Activated B cell treated with CpG ODN at 0.5 μM for 24 hours (primary cell): ENCODE measurements at regions of chr19 and their contacts with region 1.

Region 1: DNA sequence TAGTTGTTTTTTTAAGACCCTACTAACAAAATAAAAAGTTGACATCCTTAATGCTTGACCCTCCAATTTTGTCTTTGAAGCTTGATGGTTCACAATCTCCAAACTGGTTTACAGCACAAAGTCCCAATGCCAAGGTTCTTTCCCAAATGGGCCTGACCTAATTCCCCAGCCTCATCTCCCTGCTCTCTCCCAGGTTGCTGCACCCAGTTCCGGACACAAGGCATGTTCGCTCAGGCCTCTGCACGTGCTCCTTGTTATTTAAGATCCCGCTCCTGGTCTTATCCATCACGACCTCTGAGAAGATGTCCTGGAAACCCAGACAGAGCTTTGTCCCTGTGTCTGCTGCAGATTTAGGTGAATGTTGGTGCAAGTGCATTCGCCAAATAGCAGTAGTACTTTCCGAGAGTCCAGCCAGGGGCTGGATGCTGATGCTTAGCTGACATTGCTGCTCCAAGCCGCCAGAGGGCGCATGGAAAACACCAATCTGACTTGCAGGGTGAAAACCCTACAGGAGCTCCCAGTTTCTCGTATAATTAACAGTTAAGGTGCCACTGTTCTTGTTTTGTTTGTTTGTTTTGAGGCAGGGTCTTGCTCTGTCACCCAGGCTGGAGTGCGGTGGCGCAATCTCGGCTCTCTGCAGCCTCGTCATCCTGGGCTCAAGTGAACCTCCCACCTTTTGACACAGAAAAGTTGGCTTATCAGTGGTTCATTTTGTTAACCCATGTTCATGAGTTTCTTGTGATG is 18.5 kb downstream of the LYPD3 start:
- DNase-seq: peak; percentile 67
- ATAC-seq: peak; percentile 90
- H3K4me3 Mint-ChIP-seq: no peak overlapping the region
- H3K27ac Mint-ChIP-seq: no peak overlapping the region
- H3K4me1 Mint-ChIP-seq: peaks cover 6% of the 10 kb centered on the region
- H3K27me3 Mint-ChIP-seq: no peaks in the 10 kb centered on the region
- CTCF ChIP-seq: peak; percentile 47

Region 2: DNA sequence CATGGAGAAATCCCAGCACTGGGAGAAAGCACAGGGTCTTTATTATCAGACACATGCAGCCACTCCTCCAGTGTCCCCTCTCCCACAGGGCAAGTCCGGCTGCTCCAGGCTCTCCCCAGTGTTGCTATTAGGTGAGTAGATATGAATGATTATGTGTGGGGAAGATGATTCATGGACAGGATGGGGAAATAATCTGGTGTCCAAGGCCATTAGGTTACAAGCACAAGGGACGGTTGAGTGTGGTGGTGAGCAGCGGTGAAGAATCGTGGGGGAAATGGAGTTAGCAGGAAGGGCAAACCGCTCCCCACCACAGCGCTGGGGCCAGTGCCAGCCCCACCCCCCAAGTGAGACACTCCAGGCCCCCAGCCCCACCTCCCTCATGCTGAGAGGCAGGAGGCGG is 74.5 kb before region 1 on chr19:
- CTCF ChIA-PET with region 1: no interaction called
- POLR2A ChIA-PET with region 1: no interaction called
- intact Hi-C with region 1: no loop called
- DNase-seq: no peak
- ATAC-seq: no peak
- H3K4me3 Mint-ChIP-seq: no peak overlapping the region
- H3K27ac Mint-ChIP-seq: no peak overlapping the region
- H3K4me1 Mint-ChIP-seq: no peaks in the 10 kb centered on the region
- H3K27me3 Mint-ChIP-seq: peaks cover 1% of the 10 kb centered on the region
- CTCF ChIP-seq: no peak

Region 3: GRCh38 chr19:43433358-43433673 is 13.6 kb before region 1 on chr19:
- CTCF ChIA-PET with region 1: interaction called, 13 read pairs
- POLR2A ChIA-PET with region 1: interaction called, 3 read pairs
- intact Hi-C with region 1: loop called (anchors 2 kb)
- DNase-seq: no peak
- ATAC-seq: no peak
- H3K4me3 Mint-ChIP-seq: no peak overlapping the region
- H3K27ac Mint-ChIP-seq: no peak overlapping the region
- H3K4me1 Mint-ChIP-seq: peaks cover 33% of the 10 kb centered on the region
- H3K27me3 Mint-ChIP-seq: no peaks in the 10 kb centered on the region
- CTCF ChIP-seq: no peak

Region 4: GRCh38 chr19:43526884-43527859 is 80.3 kb after region 1 on chr19 and contains the start of gene ETHE1:
- CTCF ChIA-PET with region 1: interaction called, 61 read pairs
- POLR2A ChIA-PET with region 1: interaction called, 3 read pairs
- intact Hi-C with region 1: no loop called
- DNase-seq: peak; percentile 76
- ATAC-seq: peak; percentile 92
- H3K4me3 Mint-ChIP-seq: peak within 1 kb of the TSS; percentile 89
- H3K27ac Mint-ChIP-seq: peak within 1 kb of the TSS; percentile 82
- H3K4me1 Mint-ChIP-seq: peaks cover 25% of the 10 kb centered on the region
- H3K27me3 Mint-ChIP-seq: no peaks in the 10 kb centered on the region
- CTCF ChIP-seq: no peak
- total RNA-seq, gene ETHE1: 16.3 and 16.7 TPM in 2 replicates

Region 5: GRCh38 chr19:43809762-43810696 is 363.1 kb after region 1 on chr19:
- CTCF ChIA-PET with region 1: interaction called, 11 read pairs
- POLR2A ChIA-PET with region 1: no interaction called
- intact Hi-C with region 1: loop called (anchors 1 kb)
- DNase-seq: no peak
- ATAC-seq: peak; percentile 49
- H3K4me3 Mint-ChIP-seq: no peak overlapping the region
- H3K27ac Mint-ChIP-seq: no peak overlapping the region
- H3K4me1 Mint-ChIP-seq: no peaks in the 10 kb centered on the region
- H3K27me3 Mint-ChIP-seq: peaks cover 14% of the 10 kb centered on the region
- CTCF ChIP-seq: no peak